ENCODE measurements at regions of chr2 and their contacts with region 1.

Region 1: DNA sequence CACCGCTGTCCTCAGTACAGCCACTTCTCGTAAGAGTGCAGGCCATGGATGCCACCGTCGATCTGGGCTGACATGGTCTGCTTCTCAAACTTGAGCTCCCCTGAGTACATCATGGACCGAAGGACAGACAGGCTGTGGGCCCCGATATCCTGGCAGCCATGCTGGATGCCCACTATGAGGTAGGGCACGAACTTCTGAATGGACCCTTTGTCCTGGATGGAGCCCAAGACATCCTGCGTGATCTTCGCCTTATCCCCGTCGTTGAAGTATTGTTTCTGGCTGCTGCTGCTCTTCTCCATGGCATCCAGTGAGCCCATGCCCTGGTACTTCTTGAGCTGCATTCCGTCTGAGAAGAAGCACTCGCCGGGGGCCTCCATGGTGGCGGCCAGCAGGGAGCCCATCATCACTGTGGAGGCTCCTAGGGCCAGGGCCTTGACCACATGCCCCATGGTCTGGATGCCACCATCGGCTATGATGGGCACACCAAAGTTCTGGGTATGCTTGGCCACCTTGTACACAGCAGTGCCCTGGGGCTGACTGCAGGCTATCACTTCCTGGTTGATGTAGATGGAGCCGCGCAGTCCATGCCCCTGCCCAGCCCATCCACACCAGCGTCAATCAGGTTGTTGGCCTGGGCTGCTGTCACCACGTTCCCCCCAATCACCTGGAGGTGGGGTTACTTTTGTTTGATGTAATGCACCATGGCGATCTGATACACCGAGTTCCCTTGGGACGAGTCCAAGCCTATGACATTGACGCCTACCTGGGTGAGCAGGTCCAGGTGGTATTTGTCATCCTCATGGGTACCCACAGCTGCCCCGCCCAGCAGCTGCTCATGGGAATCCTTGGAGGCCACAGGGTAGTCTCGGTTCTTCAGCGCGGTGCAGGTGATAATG is 21.8 kb downstream of the CFLAR start:
- DNase-seq: no peak
- H3K4me3 ChIP-seq: no peak overlapping the region
- H3K27ac ChIP-seq: no peak overlapping the region
- H3K4me1 ChIP-seq: no peaks in the 10 kb centered on the region
- H3K27me3 ChIP-seq: no peaks in the 10 kb centered on the region
- CTCF ChIP-seq: no peak
- POLR2A ChIP-seq: no peak

Region 2: DNA sequence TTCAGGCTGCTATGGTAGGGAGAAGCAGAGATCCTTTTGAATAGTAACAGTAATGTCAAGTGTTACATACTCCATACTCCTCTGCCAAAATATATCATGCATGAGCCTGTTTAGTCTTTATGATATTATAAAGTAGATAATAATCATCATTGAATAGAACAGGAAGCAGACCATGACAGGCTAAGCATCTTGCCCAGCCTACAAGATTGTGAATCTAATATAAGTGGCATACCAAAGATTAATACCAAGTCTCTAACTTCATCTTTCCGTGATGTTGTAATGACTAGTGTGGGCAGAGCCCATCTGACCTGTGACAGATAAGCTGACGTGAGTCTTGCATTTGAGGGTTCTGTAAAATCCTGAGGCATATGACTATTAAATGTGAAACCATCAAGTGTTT is 52.9 kb before region 1 on chr2:
- intact Hi-C with region 1: no loop called
- DNase-seq: no peak
- H3K4me3 ChIP-seq: no peak overlapping the region
- H3K27ac ChIP-seq: no peak overlapping the region
- H3K4me1 ChIP-seq: no peaks in the 10 kb centered on the region
- H3K27me3 ChIP-seq: no peaks in the 10 kb centered on the region
- CTCF ChIP-seq: no peak
- POLR2A ChIP-seq: no peak

Region 3: GRCh38 chr2:201191132-201191875 is 53.6 kb after region 1 on chr2:
- intact Hi-C with region 1: loop called (anchors 2 kb)
- DNase-seq: no peak
- H3K4me3 ChIP-seq: no peak overlapping the region
- H3K27ac ChIP-seq: peak overlapping the region in 1 of 2 donors; percentile 25
- H3K4me1 ChIP-seq: no peaks in the 10 kb centered on the region
- H3K27me3 ChIP-seq: no peaks in the 10 kb centered on the region
- CTCF ChIP-seq: no peak
- POLR2A ChIP-seq: no peak

Measured in breast epithelium (tissue), 4 donors.